ENCODE measurements at regions of chr2 and their contacts with region 1.

Region 1: DNA sequence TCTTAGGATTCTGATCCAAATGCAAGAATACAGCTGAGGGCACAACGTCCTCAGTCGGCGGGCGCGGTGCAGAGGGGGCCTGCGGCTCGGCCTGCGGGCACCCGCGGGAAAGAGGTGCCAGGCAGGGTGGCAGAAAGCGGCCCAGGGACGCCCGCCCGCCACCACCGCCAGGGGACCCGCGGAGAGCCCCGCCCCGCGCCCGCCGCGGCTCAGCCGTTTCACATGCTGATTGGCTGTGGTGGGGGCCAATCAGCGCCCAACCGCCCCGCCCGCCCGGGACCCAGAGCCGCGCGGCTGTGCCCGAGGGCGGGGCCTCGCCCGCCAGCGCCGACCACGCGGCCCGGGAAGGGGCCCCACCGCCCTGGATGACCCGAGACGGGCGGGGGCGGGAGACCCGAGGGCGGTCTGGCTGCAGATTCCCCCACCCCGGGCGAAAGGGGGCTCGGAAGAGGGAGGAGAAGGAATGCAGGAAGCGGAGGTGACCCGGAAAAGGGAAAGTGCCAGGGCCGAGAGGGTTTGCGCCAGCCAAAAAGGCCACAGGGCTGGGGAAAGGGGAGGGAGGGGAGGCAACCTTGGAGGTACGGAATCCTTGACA is 8.0 kb downstream of the IRS1 start:
- DNase-seq: peak; percentile 88
- H3K4me3 Mint-ChIP-seq: peak overlapping the region; percentile 73
- H3K27ac Mint-ChIP-seq: peak overlapping the region; percentile 98
- H3K4me1 Mint-ChIP-seq: peaks cover 31% of the 10 kb centered on the region
- H3K27me3 Mint-ChIP-seq: no peaks in the 10 kb centered on the region
- CTCF ChIP-seq: peak; percentile 26

Region 2: DNA sequence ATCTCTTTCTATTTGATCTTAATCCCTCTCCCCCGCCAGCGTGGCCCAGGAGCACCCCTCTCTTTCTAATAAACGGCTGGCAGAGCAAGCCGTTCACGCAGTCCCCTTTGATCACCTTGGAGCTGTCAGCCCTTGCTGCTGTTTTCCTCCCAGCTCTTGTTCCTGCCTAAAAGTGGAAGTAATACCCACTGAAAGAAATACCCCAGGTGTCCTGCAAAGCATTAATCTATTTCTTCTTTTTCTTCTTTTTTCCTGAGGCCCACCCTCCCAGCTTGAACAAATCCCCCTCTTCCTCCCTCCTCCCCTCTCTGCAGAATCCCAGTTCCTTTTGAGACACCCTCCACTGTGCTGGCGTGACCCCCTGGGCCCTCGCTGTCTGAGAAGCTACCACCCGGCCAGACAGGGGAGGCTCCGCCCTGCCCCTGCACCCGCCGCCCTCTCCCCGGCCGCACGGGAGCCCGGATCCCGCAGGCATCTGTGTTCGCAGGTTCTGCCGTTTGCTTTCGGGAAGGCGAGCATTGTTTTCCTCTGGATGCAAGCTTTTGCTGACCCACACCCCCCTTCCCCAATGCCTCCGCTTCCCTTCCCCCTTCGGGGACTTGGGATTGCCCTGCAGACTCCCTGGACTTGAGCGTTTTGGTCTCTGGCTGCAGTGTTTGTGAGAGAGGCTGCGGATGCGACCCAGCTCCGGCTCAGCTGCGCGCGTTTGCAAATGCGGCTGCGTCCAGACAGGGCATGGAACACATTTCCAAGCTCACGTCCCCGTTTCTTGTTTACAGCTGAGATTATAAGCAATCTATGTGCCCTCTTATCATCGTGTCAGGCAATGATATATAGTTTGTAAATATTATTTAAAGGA is 760.6 kb before region 1 on chr2:
- CTCF ChIA-PET with region 1: no interaction called
- POLR2A ChIA-PET with region 1: no interaction called
- intact Hi-C with region 1: loop called (anchors 10 kb)
- DNase-seq: peak; percentile 51
- H3K4me3 Mint-ChIP-seq: peak overlapping the region; percentile 74
- H3K27ac Mint-ChIP-seq: no peak overlapping the region
- H3K4me1 Mint-ChIP-seq: peaks cover 21% of the 10 kb centered on the region
- H3K27me3 Mint-ChIP-seq: no peaks in the 10 kb centered on the region
- CTCF ChIP-seq: no peak

Region 3: DNA sequence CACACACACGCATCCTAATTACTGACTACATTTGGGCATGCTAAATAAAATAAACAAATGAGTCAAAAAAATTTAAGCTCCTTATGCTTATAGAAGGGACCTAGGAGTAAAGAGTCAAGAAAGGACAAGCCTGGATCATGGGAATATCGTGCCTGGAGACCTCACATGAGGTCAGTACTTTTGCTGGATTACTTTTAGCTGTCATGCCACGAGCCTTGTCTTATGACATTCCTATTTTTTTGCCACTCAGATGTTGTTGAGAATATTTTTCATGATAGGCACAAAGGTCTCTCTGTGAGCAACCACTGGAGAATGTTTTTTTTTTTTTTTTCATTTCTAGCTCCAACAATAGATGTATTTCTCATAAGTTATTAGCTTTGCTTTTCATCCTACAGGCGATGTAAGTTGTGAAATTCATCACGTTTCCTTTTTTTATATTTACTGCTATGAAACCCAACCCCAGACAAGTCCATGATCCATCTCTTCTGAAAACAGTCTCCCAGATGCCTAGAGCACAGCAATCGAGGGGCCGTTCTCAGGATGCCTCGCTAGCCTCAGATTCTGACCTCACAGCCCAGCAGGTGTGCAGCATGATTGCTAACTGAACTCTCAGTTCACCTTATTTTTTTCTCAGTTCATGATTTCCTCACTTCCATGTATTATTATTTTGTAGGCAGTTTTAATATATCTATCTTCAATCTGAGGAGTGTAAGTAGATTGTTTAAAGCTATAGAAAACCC is 456.4 kb before region 1 on chr2:
- CTCF ChIA-PET with region 1: no interaction called
- POLR2A ChIA-PET with region 1: no interaction called
- intact Hi-C with region 1: loop called (anchors 10 kb)
- DNase-seq: no peak
- H3K4me3 Mint-ChIP-seq: no peak overlapping the region
- H3K27ac Mint-ChIP-seq: no peak overlapping the region
- H3K4me1 Mint-ChIP-seq: peaks cover 9% of the 10 kb centered on the region
- H3K27me3 Mint-ChIP-seq: no peaks in the 10 kb centered on the region
- CTCF ChIP-seq: no peak

Region 4: GRCh38 chr2:226447338-226448295 is 344.0 kb before region 1 on chr2:
- CTCF ChIA-PET with region 1: interaction called, 8 read pairs
- POLR2A ChIA-PET with region 1: interaction called, 17 read pairs
- intact Hi-C with region 1: no loop called
- DNase-seq: peak; percentile 46
- H3K4me3 Mint-ChIP-seq: no peak overlapping the region
- H3K27ac Mint-ChIP-seq: peak overlapping the region; percentile 49
- H3K4me1 Mint-ChIP-seq: peaks cover 21% of the 10 kb centered on the region
- H3K27me3 Mint-ChIP-seq: no peaks in the 10 kb centered on the region
- CTCF ChIP-seq: no peak

Region 5: GRCh38 chr2:226649871-226650660 is 141.5 kb before region 1 on chr2:
- CTCF ChIA-PET with region 1: no interaction called
- POLR2A ChIA-PET with region 1: interaction called, 20 read pairs
- intact Hi-C with region 1: loop called (anchors 5 kb)
- DNase-seq: peak; percentile 99
- H3K4me3 Mint-ChIP-seq: no peak overlapping the region
- H3K27ac Mint-ChIP-seq: peak overlapping the region; percentile 95
- H3K4me1 Mint-ChIP-seq: peaks cover 35% of the 10 kb centered on the region
- H3K27me3 Mint-ChIP-seq: no peaks in the 10 kb centered on the region
- CTCF ChIP-seq: no peak

Region 6: DNA sequence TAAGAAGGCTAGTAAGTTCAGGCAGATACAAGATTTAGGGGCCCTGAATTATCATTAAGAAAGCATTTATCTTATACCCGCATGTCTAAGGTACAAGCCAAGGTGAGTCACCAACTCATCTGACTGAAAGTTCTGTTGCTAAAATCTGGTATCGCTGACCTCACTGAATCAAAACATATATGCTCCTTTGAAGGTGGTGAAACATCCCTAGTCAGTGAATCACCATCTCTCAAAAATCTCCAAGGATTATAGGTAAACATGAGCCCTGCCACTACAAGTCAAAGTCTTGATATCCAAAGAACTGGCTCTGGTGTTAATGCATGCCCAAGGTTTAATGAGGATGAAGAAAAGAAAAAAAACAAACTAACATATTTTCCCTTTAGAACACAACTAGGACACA is 35.5 kb before region 1 on chr2:
- CTCF ChIA-PET with region 1: interaction called, 10 read pairs
- POLR2A ChIA-PET with region 1: interaction called, 114 read pairs
- intact Hi-C with region 1: no loop called
- DNase-seq: peak; percentile 93
- H3K4me3 Mint-ChIP-seq: no peak overlapping the region
- H3K27ac Mint-ChIP-seq: peak overlapping the region; percentile 97
- H3K4me1 Mint-ChIP-seq: peaks cover 15% of the 10 kb centered on the region
- H3K27me3 Mint-ChIP-seq: no peaks in the 10 kb centered on the region
- CTCF ChIP-seq: no peak